ENCODE measurements at regions of chr6 and their contacts with region 1.

Region 1: GRCh38 chr6:78324213-78324612 is 543.1 kb upstream of the IRAK1BP1 start:
- DNase-seq: no peak
- H3K4me3 ChIP-seq: no peak overlapping the region
- H3K27ac ChIP-seq: no peak overlapping the region
- H3K4me1 ChIP-seq: no peaks in the 10 kb centered on the region
- H3K27me3 ChIP-seq: no peaks in the 10 kb centered on the region
- CTCF ChIP-seq: no peak

Region 2: DNA sequence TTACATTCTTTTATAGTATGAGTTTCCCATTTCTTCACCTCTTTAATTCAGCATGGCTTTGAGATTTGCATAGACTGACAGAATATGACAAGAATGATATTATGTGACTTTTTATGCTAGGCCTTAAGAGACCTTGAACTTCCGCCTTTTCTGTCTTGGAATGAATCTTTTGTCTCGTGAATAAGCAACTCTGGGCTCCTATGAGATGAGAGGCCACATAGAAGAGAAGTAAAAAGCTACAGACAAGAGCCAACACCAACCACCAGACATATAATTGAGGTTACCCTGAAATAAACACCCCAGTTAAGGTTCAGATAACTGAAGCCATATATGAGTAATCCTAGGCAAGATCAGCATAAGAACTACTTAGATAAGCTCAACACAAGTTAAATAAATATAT is 70.6 kb before region 1 on chr6:
- intact Hi-C with region 1: loop called (anchors 2 kb)
- DNase-seq: no peak
- H3K4me3 ChIP-seq: no peak overlapping the region
- H3K27ac ChIP-seq: no peak overlapping the region
- H3K4me1 ChIP-seq: no peaks in the 10 kb centered on the region
- H3K27me3 ChIP-seq: no peaks in the 10 kb centered on the region
- CTCF ChIP-seq: no peak

Region 3: DNA sequence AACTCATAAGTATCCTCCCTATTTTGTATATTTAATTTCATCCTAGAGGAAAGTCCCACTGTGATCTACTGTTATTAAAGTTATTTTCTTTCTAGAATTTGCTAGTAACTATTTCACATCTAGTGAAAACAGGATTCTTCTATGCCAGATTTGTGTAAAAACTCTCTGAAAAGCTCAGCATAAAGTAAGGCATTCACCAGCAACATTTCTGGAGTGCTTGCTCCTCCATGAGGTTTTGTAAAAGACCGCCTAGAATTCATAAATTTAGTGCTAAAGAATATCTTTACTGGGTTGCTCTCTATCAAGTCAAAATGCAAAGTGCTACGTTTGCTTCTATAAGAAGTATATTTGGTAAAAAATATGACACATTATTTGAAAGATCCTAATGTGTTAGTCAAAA is 369.6 kb after region 1 on chr6:
- intact Hi-C with region 1: no loop called
- DNase-seq: no peak
- H3K4me3 ChIP-seq: no peak overlapping the region
- H3K27ac ChIP-seq: no peak overlapping the region
- H3K4me1 ChIP-seq: no peaks in the 10 kb centered on the region
- H3K27me3 ChIP-seq: no peaks in the 10 kb centered on the region
- CTCF ChIP-seq: no peak

Measured in ascending aorta (tissue), 2 donors.